ENCODE measurements at regions of chr12 and their contacts with region 1.

Region 1: GRCh38 chr12:105330283-105330930 is at the start of gene C12orf75:
- DNase-seq: peak; percentile 62 to 94 (median 72)
- ATAC-seq: peak; percentile 91
- H3K4me3 ChIP-seq: peak within 1 kb of the TSS; percentile 56
- H3K4me3 Mint-ChIP-seq: peak within 1 kb of the TSS; percentile 82 to 94 (median 90)
- H3K27ac ChIP-seq: peak within 1 kb of the TSS; percentile 64
- H3K27ac Mint-ChIP-seq: peak within 1 kb of the TSS; percentile 65 to 95 (median 86)
- H3K4me1 ChIP-seq: peaks cover 12 to 57% of the 10 kb centered on the region in 2 donors
- H3K4me1 Mint-ChIP-seq: peaks cover 16 to 74% (median 24%) of the 10 kb centered on the region in 7 donors
- H3K27me3 ChIP-seq: no peaks in the 10 kb centered on the region
- H3K27me3 Mint-ChIP-seq: no peaks in the 10 kb centered on the region
- total RNA-seq, gene C12orf75: 5.5 to 146 (median 13.0) TPM

Region 2: DNA sequence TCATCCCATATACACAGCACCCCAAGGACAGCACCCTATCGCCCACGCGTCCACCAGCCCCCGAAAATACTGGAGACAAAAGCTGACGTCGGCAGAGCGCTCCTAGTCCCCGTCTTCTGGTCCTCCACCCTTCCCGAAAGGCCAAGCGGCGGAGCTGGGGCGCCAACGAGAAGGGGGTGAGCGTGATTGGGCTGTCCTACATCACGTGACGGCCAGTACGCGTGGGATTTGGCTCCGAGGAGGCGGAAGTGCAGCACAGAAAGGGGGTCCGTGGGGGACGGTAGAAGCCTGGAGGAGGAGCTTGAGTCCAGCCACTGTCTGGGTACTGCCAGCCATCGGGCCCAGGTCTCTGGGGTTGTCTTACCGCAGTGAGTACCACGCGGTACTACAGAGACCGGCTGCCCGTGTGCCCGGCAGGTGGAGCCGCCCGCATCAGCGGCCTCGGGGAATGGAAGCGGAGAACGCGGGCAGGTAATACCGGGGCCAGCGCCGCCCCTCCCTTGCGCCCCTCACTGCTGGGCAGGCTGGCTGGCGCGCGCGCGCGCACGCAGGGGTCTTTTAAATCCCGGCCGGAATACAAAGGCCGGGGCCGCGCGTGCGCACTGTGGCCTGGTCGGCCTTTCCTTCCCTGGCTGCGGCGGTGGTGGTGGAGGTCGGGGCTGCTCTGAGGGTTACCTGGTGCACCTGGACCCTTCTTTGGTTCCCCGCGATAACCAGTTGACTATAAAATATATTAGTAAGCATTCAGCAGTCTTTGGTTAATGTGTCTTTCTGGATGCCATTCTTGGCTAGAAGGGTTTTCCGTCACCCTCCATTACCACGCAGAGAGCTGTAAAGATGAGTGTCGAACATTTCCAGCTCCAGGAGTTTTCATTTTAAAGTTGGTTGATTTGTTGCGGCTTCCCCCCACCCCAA is 1364.6 kb before region 1 on chr12 and contains the start of gene TDG:
- CTCF ChIA-PET with region 1: no interaction called
- POLR2A ChIA-PET with region 1: no interaction called
- intact Hi-C with region 1: loop called in 1 of 2 experiments (anchors 10 kb)
- DNase-seq: peak; percentile 81 to 97 (median 95)
- ATAC-seq: peak; percentile 97
- H3K4me3 ChIP-seq: peak within 1 kb of the TSS; percentile 87
- H3K4me3 Mint-ChIP-seq: peak within 1 kb of the TSS; percentile 92 to 99 (median 97)
- H3K27ac ChIP-seq: peak within 1 kb of the TSS; percentile 94
- H3K27ac Mint-ChIP-seq: peak within 1 kb of the TSS; percentile 96 to 100 (median 99)
- H3K4me1 ChIP-seq: peaks cover 31 to 41% of the 10 kb centered on the region in 2 donors
- H3K4me1 Mint-ChIP-seq: peaks cover 34 to 68% (median 57%) of the 10 kb centered on the region in 7 donors
- H3K27me3 ChIP-seq: no peaks in the 10 kb centered on the region
- H3K27me3 Mint-ChIP-seq: no peaks in the 10 kb centered on the region
- total RNA-seq, gene TDG: 21.5 to 43.0 (median 35.5) TPM

Region 3: GRCh38 chr12:104303538-104304151 is 1026.8 kb before region 1 on chr12 and contains the start of gene EID3:
- CTCF ChIA-PET with region 1: no interaction called
- POLR2A ChIA-PET with region 1: no interaction called
- intact Hi-C with region 1: loop called in 1 of 2 experiments (anchors 5 kb)
- DNase-seq: peak; percentile 86 to 96 (median 91)
- ATAC-seq: peak; percentile 99
- H3K4me3 ChIP-seq: peak within 1 kb of the TSS; percentile 56
- H3K4me3 Mint-ChIP-seq: peak within 1 kb of the TSS; percentile 87 to 99 (median 96)
- H3K27ac ChIP-seq: peak within 1 kb of the TSS; percentile 84
- H3K27ac Mint-ChIP-seq: peak within 1 kb of the TSS; percentile 91 to 99 (median 97)
- H3K4me1 ChIP-seq: peaks cover 7 to 24% of the 10 kb centered on the region in 2 donors
- H3K4me1 Mint-ChIP-seq: peaks cover 35 to 72% (median 56%) of the 10 kb centered on the region in 7 donors
- H3K27me3 ChIP-seq: no peaks in the 10 kb centered on the region
- H3K27me3 Mint-ChIP-seq: no peaks in the 10 kb centered on the region
- total RNA-seq, gene EID3: 8.2 to 11.8 (median 10.4) TPM

Region 4: GRCh38 chr12:105235732-105236476 is 94.5 kb before region 1 on chr12 and contains the start of gene APPL2:
- CTCF ChIA-PET with region 1: interaction called, 5 read pairs
- POLR2A ChIA-PET with region 1: interaction called, 16 read pairs
- intact Hi-C with region 1: loop called (anchors 1 to 2 kb)
- DNase-seq: peak; percentile 52 to 81 (median 71)
- ATAC-seq: peak; percentile 86
- H3K4me3 ChIP-seq: peak within 1 kb of the TSS; percentile 71
- H3K4me3 Mint-ChIP-seq: peak within 1 kb of the TSS in 9 of 10 donors; percentile 89 to 95 (median 93)
- H3K27ac ChIP-seq: peak within 1 kb of the TSS; percentile 78
- H3K27ac Mint-ChIP-seq: peak within 1 kb of the TSS; percentile 86 to 96 (median 91)
- H3K4me1 ChIP-seq: peaks cover 25 to 39% of the 10 kb centered on the region in 2 donors
- H3K4me1 Mint-ChIP-seq: peaks cover 42 to 54% (median 48%) of the 10 kb centered on the region in 7 donors
- H3K27me3 ChIP-seq: no peaks in the 10 kb centered on the region
- H3K27me3 Mint-ChIP-seq: peaks cover 0 to 3% (median 0%) of the 10 kb centered on the region in 5 donors
- total RNA-seq, gene APPL2: 31.6 to 74.5 (median 58.3) TPM

Region 5: DNA sequence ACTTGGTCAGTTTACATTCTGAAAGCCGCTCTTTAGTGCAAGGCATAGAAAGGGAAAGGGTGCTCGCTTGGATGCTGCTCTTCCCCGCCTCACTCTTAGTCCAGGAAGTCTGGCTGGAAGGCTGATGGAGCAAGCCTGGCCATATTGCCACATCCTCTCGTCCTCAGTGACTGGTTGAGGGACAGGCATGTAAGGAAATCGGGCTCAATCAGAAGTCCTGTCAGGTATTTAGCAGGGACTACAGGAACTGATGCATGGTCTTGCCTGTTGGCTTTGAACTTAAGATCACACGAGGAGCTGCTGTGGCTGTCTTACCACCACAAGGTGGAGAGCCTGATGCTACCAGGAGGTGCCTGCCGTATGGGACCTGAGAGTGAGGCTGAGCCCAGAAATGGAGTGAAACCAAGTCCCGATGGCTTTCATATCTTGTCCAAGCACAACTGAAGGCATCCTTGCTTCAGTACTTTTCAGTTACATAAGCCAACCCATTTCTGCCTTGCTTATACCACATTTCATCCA is 10.7 kb before region 1 on chr12:
- CTCF ChIA-PET with region 1: interaction called, 8 read pairs
- POLR2A ChIA-PET with region 1: interaction called, 3 read pairs
- intact Hi-C with region 1: loop called in 1 of 2 experiments (anchors 1 kb)
- DNase-seq: peak in 5 of 9 donors; percentile 8 to 29 (median 19)
- ATAC-seq: peak; percentile 63
- H3K4me3 ChIP-seq: no peak overlapping the region
- H3K4me3 Mint-ChIP-seq: no peak overlapping the region
- H3K27ac ChIP-seq: no peak overlapping the region
- H3K27ac Mint-ChIP-seq: no peak overlapping the region
- H3K4me1 ChIP-seq: no peaks in the 10 kb centered on the region
- H3K4me1 Mint-ChIP-seq: peaks cover 11 to 67% (median 17%) of the 10 kb centered on the region in 7 donors
- H3K27me3 ChIP-seq: no peaks in the 10 kb centered on the region
- H3K27me3 Mint-ChIP-seq: no peaks in the 10 kb centered on the region

Measured in naive thymus-derived CD4-positive, alpha-beta T cell (primary cell).